ENCODE measurements at regions of chr12 and their contacts with region 1.

Region 1: GRCh38 chr12:53321074-53321814 is at the start of gene AAAS:
- DNase-seq: peak; percentile 98
- H3K4me3 ChIP-seq: peak within 1 kb of the TSS; percentile 62 to 71 (median 66)
- H3K27ac ChIP-seq: peak within 1 kb of the TSS; percentile 83 to 95 (median 90)
- H3K4me1 ChIP-seq: peaks cover 0 to 47% (median 36%) of the 10 kb centered on the region in 4 donors
- H3K27me3 ChIP-seq: no peaks in the 10 kb centered on the region
- CTCF ChIP-seq: peak; percentile 96 to 99 (median 98)
- EP300 ChIP-seq: no peak
- POLR2A ChIP-seq: no peak
- total RNA-seq, gene AAAS: 38.2 to 62.0 (median 47.4) TPM

Region 2: GRCh38 chr12:53344824-53345485 is 23.7 kb after region 1 on chr12:
- intact Hi-C with region 1: loop called (anchors 1 kb)
- DNase-seq: peak; percentile 93
- H3K4me3 ChIP-seq: peak overlapping the region; percentile 63 to 75 (median 69)
- H3K27ac ChIP-seq: peak overlapping the region; percentile 86 to 97 (median 90)
- H3K4me1 ChIP-seq: peaks cover 0 to 15% (median 13%) of the 10 kb centered on the region in 4 donors
- H3K27me3 ChIP-seq: no peaks in the 10 kb centered on the region
- CTCF ChIP-seq: peak; percentile 73 to 85 (median 79)
- EP300 ChIP-seq: no peak
- POLR2A ChIP-seq: no peak

Measured in sigmoid colon (tissue), 7 donors.